Ovary (tissue), 10 donors: ENCODE measurements at regions of chr18 and their contacts with region 1.

Region 1: GRCh38 chr18:58263055-58263957 is 219.3 kb downstream of the NEDD4L start:
- DNase-seq: no peak
- H3K4me3 ChIP-seq: no peak overlapping the region
- H3K27ac ChIP-seq: no peak overlapping the region
- H3K4me1 ChIP-seq: no peaks in the 10 kb centered on the region
- H3K27me3 ChIP-seq: no peaks in the 10 kb centered on the region
- CTCF ChIP-seq: no peak
- EP300 ChIP-seq: no peak
- POLR2A ChIP-seq: no peak

Region 2: DNA sequence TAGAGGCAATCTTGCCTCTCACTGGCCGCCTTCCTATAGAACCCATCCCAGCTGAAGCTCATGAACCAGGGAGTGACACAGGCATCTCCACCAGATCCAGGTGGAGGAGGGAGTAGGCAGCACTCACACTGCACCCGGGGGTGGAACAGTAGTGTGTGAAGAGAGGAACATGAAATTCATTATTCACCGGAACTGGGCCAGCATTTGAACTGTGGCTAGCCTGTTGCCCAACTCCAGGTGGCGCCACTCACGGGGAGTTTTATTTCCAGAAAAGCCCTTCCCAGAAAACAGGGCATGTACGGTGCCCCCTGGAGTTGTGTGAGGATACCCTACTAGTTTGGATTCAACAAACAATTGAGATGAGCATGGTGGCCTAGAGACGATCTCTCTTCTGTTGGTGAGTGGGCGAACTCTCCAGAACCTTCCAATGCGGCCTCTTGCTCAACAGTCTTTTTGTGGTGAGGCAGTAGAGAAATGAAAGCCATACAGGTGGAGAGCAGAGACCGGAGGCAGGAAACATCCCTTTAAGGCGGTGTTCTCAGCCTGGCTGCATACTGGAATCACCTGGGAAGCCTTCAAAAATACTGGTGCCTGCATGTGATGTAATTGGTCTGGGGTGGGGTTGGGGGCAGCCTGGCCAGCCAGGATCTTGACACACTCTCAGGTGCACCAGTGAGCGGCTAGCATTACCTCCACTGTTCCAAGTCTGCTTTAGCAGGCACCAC is 292.8 kb before region 1 on chr18:
- intact Hi-C with region 1: no loop called
- DNase-seq: no peak
- H3K4me3 ChIP-seq: no peak overlapping the region
- H3K27ac ChIP-seq: no peak overlapping the region
- H3K4me1 ChIP-seq: peaks cover 4% of the 10 kb centered on the region
- H3K27me3 ChIP-seq: no peaks in the 10 kb centered on the region
- CTCF ChIP-seq: no peak
- EP300 ChIP-seq: no peak
- POLR2A ChIP-seq: no peak

Region 3: GRCh38 chr18:58202406-58202730 is 60.9 kb before region 1 on chr18:
- intact Hi-C with region 1: loop called in 1 of 4 experiments (anchors 10 kb)
- DNase-seq: no peak
- H3K4me3 ChIP-seq: no peak overlapping the region
- H3K27ac ChIP-seq: no peak overlapping the region
- H3K4me1 ChIP-seq: peaks cover 1% of the 10 kb centered on the region
- H3K27me3 ChIP-seq: no peaks in the 10 kb centered on the region
- CTCF ChIP-seq: no peak
- EP300 ChIP-seq: no peak
- POLR2A ChIP-seq: no peak

Region 4: DNA sequence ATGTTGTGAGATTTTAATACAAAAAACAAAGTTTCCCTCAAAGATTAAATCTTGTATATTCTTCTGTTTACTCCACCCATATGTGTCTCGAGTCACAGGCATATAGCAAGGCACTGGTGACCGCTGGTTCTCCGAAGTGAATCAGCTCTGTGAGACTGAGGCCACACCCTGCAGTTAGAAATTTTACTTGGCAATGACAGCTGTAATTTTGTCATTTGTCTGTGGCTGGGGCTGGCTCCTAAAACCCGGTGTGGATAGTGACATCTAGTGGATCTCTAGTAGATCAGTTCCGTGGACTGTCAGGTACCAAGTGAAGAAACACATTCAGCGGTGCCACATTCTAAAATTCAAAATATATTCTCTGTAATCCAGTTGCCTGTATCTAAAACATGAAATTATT is 58.7 kb after region 1 on chr18:
- intact Hi-C with region 1: no loop called
- DNase-seq: peak in 1 of 5 donors; percentile 39
- H3K4me3 ChIP-seq: no peak overlapping the region
- H3K27ac ChIP-seq: no peak overlapping the region
- H3K4me1 ChIP-seq: no peaks in the 10 kb centered on the region
- H3K27me3 ChIP-seq: no peaks in the 10 kb centered on the region
- CTCF ChIP-seq: peak in 1 of 3 donors; percentile 27
- EP300 ChIP-seq: no peak
- POLR2A ChIP-seq: no peak